AG04450 (cell line): ENCODE measurements at regions of chr15 and their contacts with region 1.

Region 1: DNA sequence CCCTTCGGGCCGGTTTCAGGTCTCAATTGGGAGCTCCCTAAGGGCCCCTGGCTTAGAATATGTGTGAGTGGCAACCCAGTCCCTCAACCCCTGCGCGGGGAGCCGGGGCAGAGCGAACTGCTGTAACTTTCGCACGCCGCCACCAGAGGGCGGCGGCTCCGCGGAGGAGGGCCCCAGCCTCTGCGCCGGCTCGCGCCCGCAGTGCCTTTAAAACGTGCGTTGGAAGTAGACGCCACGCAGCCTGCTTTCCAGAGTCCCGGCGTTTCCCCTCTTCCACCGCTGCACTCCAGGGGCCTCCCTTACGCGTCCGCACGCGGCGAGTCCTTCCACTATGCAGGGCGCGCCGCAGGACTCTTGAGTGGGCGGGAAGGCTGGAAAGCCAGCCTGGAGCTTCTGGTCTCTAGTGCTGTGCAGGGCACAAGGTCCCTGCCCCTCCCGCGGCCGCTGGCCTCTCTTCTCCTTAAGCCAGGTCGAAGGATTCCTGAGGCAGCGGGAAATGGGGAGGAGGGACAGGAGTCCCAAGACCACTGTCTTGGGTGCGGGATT is 23.7 kb upstream of the RNU6-1 start:
- DNase-seq: peak; percentile 42
- H3K4me3 ChIP-seq: peak overlapping the region; percentile 51
- H3K27ac ChIP-seq: no peak overlapping the region
- H3K27me3 ChIP-seq: no peaks in the 10 kb centered on the region
- CTCF ChIP-seq: peak; percentile 89

Region 2: DNA sequence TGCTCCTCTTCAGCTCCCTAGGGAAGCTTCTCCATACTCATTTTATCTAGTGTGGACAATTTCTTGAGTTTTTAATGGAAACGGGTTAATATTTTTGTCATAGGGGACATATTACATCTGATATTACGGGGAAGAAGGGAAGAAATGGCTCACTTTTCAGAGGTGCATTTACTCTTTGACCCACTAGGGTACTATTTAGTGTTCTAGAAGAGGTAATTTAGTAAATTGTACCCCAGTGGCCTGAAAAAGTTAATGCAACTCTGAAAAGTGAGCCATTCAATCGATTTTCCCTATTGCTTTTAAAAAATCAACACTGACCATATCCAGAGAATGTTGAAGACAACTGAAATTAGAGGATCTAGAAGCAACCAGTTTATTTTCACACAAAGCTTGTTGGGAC is 249.8 kb before region 1 on chr15:
- CTCF ChIA-PET with region 1: no interaction called
- POLR2A ChIA-PET with region 1: no interaction called
- DNase-seq: no peak
- H3K4me3 ChIP-seq: no peak overlapping the region
- H3K27ac ChIP-seq: no peak overlapping the region
- H3K27me3 ChIP-seq: no peaks in the 10 kb centered on the region
- CTCF ChIP-seq: peak; percentile 9; the same call in 1 of the 2 replicates

Region 3: GRCh38 chr15:67880651-67881182 is 17.2 kb after region 1 on chr15:
- CTCF ChIA-PET with region 1: no interaction called
- POLR2A ChIA-PET with region 1: no interaction called
- DNase-seq: no peak
- H3K4me3 ChIP-seq: no peak overlapping the region
- H3K27ac ChIP-seq: no peak overlapping the region
- H3K27me3 ChIP-seq: no peaks in the 10 kb centered on the region
- CTCF ChIP-seq: no peak

Region 4: GRCh38 chr15:68154923-68155559 is 291.5 kb after region 1 on chr15:
- CTCF ChIA-PET with region 1: interaction called, 105 read pairs
- POLR2A ChIA-PET with region 1: no interaction called
- DNase-seq: peak; percentile 34
- H3K4me3 ChIP-seq: no peak overlapping the region
- H3K27ac ChIP-seq: no peak overlapping the region
- H3K27me3 ChIP-seq: no peaks in the 10 kb centered on the region
- CTCF ChIP-seq: peak; percentile 85

Region 5: DNA sequence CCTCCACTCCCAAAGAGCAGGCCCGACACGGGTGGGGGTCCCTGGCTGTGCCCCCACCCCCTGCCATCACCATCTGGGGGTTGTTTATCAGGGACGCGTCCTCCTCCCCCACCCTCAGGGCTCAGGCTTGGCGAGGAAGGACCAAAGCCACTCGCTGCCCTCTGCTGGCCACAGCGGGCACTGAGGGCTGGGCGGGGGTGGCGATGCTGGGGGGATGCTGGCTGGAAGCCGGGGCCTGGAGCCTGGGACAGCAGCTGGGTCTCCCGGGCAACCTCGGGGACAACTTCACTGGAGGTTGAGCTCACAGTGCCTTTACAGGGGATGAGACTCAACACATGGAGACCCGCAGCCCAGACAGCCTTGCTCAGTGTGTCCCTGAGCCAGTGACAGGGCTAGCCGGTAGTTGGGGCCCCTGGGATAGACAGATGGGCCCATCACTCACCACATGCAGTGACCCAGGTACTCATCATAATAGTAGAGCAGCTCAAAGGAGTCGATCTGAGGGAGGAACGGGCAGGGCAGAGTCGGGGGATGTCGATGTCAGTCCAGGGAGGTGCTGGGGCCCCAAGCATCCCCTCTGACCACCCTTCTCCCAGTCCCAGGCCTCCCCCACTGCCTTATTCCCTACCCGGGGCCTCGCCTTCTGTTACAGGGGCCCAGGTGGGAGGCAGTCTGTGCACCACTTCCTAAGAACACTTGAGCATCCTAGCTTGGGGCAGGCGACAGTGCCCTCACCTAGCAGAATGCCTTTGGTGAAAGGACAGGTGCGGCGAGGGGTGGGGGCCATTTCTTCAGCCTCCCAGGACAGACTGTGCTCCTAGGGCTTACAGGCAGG is 347.5 kb after region 1 on chr15:
- CTCF ChIA-PET with region 1: interaction called, 17 read pairs
- POLR2A ChIA-PET with region 1: no interaction called
- DNase-seq: no peak
- H3K4me3 ChIP-seq: 0 out of 2 replicates have a peak overlapping the region, but pooled peaks have one; percentile 4
- H3K27ac ChIP-seq: no peak overlapping the region
- H3K27me3 ChIP-seq: no peaks in the 10 kb centered on the region
- CTCF ChIP-seq: peak; percentile 85